Activated T-helper 1 cell treated with anti-CD3 and anti-CD28 coated beads, Interleukin-12 subunit alpha, Interleukin-12 subunit beta, Interleukin-2, Interleukin-4 antibody, amounts not matched to agents 30 ng/mL and 10 ng/mL and 1 ng/mL, durations not matched to agents 14 hours and 24 hours and 36 hours (primary cell): ENCODE measurements at regions of chr4 and their contacts with region 1.

Region 1: GRCh38 chr4:109815151-109816081 is at the start of gene GAR1:
- DNase-seq: peak; percentile 88
- H3K4me3 Mint-ChIP-seq: peak within 1 kb of the TSS; percentile 98
- H3K27ac Mint-ChIP-seq: peak within 1 kb of the TSS; percentile 96
- H3K4me1 Mint-ChIP-seq: peaks cover 52% of the 10 kb centered on the region
- H3K27me3 Mint-ChIP-seq: no peaks in the 10 kb centered on the region
- total RNA-seq, gene GAR1: 53.2 and 61.3 TPM in 2 replicates

Region 2: DNA sequence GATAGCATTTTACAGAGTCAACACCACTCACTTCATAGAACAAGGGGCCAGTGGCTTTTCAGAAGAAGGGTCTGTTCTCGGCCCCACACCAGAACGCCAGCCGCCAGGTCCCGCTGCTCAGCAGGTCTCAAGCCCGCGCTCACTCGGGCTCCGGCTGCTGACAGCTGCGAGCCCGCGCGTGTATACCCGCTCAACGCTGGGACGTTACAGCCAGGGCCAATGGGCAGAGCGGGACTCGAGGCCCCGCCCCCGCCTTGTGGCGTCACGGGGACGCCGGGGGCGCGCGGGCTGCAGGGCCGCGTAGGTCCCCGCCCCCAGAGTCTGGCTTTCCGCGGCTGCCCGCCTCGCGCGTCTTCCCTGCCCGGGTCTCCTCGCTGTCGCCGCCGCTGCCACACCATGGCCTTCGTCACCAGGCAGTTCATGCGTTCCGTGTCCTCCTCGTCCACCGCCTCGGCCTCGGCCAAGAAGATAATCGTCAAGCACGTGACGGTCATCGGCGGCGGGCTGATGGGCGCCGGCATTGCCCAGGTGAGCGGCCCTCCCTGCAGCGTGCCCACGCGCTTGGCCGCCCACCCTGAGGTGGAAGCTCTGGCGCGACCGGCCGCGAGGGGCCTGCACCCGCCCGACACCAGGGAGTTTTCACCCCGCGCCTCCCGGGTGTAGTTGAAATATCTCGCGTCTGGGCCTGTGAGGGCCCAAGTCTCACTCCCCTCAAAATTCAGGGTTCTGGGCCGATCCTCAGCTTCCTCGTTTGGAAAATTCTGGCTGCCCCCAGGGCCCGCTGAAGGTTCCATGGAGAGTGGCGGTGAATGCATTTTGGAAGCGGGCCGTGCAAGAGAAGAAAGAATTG is 1825.7 kb before region 1 on chr4 and contains the start of gene HADH:
- intact Hi-C with region 1: loop called (anchors 5 kb)
- DNase-seq: peak; percentile 95
- H3K4me3 Mint-ChIP-seq: peak within 1 kb of the TSS; percentile 97
- H3K27ac Mint-ChIP-seq: peak within 1 kb of the TSS; percentile 96
- H3K4me1 Mint-ChIP-seq: peaks cover 57% of the 10 kb centered on the region
- H3K27me3 Mint-ChIP-seq: no peaks in the 10 kb centered on the region
- total RNA-seq, gene HADH: 33.9 and 36.8 TPM in 2 replicates

Region 3: DNA sequence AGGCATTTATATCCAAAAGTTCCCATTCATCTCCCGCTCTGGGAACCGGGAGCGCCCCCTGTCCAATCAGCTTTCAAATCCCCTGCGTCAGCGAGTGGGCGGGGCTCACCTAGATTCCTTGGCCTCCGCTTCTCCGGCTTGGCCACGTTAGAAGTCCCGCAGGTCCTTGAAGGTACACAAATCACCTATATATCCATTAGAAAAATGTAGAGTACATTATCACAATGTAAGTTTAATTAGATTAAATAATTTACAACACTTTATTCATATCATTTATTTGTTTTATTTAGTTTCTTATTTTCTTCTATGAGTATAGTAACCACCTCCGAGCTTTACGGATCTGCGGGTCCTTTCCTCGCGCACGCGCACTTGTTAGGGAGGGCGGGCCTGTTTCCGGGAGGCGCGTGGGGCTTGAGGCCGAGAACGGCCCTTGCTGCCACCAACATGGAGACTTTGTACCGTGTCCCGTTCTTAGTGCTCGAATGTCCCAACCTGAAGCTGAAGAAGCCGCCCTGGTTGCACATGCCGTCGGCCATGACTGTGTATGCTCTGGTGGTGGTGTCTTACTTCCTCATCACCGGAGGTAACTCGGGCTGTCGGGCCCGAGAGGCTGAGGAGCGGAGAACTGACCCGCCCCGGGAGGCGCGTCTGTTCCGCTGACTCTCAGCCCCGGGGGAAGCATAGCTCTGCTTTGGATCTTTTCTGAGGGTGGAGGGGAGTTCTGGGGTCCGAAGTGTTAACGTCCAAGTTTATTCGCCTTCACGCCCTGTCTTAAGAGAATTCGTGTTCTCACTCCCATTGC is 1165.0 kb before region 1 on chr4 and contains the start of gene OSTC:
- intact Hi-C with region 1: loop called (anchors 2 kb)
- DNase-seq: peak; percentile 90
- H3K4me3 Mint-ChIP-seq: peak within 1 kb of the TSS; percentile 99
- H3K27ac Mint-ChIP-seq: peak within 1 kb of the TSS; percentile 93
- H3K4me1 Mint-ChIP-seq: peaks cover 39% of the 10 kb centered on the region
- H3K27me3 Mint-ChIP-seq: no peaks in the 10 kb centered on the region
- total RNA-seq, gene OSTC: 96.1 and 96.7 TPM in 2 replicates

Region 4: DNA sequence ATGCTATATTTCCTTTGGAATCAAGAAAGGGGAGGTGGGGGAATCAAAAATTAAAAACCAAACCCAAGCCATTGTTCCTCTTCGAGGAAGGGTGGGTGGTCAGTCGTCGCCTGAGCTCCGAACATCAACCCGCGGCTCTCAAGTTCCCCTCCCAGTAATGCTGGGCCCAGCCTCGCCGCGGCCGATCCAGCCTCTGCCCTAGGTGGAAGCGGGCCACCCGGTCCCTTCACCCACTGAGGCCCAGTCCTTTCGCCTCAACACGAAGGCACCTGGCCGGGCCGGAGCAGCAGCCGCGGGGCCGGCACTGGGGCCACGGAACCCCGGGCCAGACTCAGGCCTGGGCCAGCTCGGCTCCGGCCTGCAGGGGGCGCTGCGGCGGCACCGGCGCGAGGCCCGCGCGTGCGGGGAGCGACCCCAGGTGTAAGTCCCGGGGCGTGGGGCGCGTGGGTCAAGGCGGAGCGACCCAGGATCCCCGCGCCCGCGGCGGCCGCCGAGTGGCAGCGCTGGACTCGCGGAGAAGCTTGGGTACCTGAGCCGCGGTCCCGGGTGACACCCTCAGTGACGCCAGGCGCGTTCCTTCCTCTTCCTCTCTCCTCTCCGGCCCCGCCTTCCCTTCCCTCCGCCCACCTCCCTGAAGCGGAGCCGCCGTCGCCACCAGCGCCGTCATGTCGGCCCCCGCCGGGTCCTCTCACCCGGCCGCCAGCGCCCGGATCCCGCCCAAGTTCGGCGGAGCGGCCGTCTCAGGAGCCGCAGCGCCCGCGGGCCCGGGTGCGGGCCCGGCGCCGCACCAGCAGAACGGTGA is 382.0 kb before region 1 on chr4 and contains the start of gene SEC24B:
- intact Hi-C with region 1: loop called (anchors 1 kb)
- DNase-seq: peak; percentile 86
- H3K4me3 Mint-ChIP-seq: peak within 1 kb of the TSS; percentile 87
- H3K27ac Mint-ChIP-seq: peak within 1 kb of the TSS; percentile 79
- H3K4me1 Mint-ChIP-seq: peaks cover 57% of the 10 kb centered on the region
- H3K27me3 Mint-ChIP-seq: no peaks in the 10 kb centered on the region
- total RNA-seq, gene SEC24B: 32.5 and 34.0 TPM in 2 replicates

Region 5: GRCh38 chr4:109702950-109703663 is 112.3 kb before region 1 on chr4 and contains the start of gene CASP6:
- intact Hi-C with region 1: loop called (anchors 1 kb)
- DNase-seq: peak; percentile 68
- H3K4me3 Mint-ChIP-seq: peak within 1 kb of the TSS; percentile 85
- H3K27ac Mint-ChIP-seq: peak within 1 kb of the TSS; percentile 93
- H3K4me1 Mint-ChIP-seq: peaks cover 45% of the 10 kb centered on the region
- H3K27me3 Mint-ChIP-seq: no peaks in the 10 kb centered on the region
- total RNA-seq, gene CASP6: 29.5 and 32.9 TPM in 2 replicates

Region 6: DNA sequence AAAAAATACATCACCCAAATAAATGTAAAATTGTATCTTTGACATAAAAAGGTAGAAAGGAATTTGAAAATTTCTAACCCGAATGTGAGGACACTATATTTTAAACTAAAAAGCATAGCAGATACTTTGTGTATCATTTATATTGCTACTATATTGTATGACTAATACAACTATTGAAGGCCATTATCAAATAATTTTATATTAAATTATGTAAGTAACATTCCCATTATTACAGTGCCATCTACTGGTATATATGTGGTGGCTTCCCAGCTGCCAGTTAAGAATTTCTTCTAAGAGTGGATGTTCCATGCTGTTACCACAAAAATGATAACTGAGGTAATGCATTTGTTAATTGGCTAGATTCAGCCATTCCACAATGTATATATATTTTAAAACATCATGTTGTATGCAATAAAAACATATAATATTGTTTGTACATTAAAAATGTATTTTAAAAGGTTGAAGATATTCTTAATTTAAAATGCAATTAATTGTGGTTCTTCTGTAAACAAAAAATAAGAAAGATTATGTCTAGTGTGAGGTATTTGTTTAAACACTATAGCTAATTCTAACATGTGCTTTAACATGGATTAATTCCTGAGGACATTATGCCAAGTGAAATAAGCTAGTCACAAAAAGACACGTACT is 162.6 kb after region 1 on chr4:
- intact Hi-C with region 1: loop called (anchors 5 kb)
- DNase-seq: no peak
- H3K4me3 Mint-ChIP-seq: no peak overlapping the region
- H3K27ac Mint-ChIP-seq: no peak overlapping the region
- H3K4me1 Mint-ChIP-seq: peaks cover 5% of the 10 kb centered on the region
- H3K27me3 Mint-ChIP-seq: peaks cover 32% of the 10 kb centered on the region